ENCODE measurements at regions of chr1 and their contacts with region 1.

Region 1: DNA sequence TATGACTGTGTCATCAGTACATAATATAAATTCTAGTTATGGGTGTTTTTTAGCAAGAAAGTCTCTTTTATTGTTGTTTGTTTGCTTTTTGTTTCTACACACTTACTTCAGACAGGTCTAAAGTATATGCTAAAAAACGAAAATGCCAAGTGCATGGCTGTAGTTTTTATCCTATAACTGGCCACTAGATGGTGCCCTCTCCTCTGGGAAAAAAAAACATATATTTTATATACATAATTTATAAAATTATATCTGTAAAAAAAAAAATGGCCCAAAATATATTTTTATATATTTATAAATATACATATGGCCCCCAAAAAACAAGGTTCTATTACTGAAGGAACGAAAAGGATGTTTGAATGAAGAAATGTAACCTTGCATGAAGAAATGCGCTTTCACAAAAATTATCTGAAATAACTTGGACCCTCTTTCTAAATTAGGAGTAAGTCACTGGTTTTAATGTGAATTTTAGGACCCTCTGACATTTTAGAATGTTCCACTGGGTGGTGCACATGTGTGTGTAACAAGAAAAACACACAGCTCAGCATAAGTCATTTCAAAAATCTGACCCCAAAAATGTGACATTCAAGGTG is 93.5 kb downstream of the TTLL7 start:
- DNase-seq: no peak
- H3K4me3 Mint-ChIP-seq: no peak overlapping the region
- H3K27ac Mint-ChIP-seq: no peak overlapping the region
- H3K4me1 Mint-ChIP-seq: no peaks in the 10 kb centered on the region
- H3K27me3 Mint-ChIP-seq: peaks cover 13% of the 10 kb centered on the region

Region 2: DNA sequence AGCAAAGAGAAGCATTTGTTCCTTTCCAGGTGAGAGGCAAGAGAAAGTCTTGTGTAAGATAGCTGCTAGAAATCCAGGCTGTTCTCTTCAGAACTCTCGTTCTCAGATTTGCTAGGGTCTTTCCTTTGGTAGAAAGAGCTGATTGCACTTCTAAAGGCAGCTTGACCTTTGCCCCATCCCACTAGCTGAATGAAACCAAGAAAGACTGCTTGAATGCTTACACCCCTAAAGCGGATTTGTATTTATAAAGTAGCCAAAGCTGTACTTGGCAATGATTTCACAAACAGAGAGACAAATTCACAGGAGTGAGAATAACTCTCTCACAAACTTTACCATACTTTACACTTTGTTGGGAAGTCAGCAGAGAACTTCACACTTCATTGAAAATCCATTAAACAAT is 330.6 kb before region 1 on chr1:
- intact Hi-C with region 1: no loop called
- DNase-seq: no peak
- H3K4me3 Mint-ChIP-seq: no peak overlapping the region
- H3K27ac Mint-ChIP-seq: no peak overlapping the region
- H3K4me1 Mint-ChIP-seq: no peaks in the 10 kb centered on the region
- H3K27me3 Mint-ChIP-seq: no peaks in the 10 kb centered on the region

Region 3: GRCh38 chr1:83626603-83627002 is 278.8 kb before region 1 on chr1:
- intact Hi-C with region 1: no loop called
- DNase-seq: no peak
- H3K4me3 Mint-ChIP-seq: no peak overlapping the region
- H3K27ac Mint-ChIP-seq: no peak overlapping the region
- H3K4me1 Mint-ChIP-seq: no peaks in the 10 kb centered on the region
- H3K27me3 Mint-ChIP-seq: no peaks in the 10 kb centered on the region

Region 4: DNA sequence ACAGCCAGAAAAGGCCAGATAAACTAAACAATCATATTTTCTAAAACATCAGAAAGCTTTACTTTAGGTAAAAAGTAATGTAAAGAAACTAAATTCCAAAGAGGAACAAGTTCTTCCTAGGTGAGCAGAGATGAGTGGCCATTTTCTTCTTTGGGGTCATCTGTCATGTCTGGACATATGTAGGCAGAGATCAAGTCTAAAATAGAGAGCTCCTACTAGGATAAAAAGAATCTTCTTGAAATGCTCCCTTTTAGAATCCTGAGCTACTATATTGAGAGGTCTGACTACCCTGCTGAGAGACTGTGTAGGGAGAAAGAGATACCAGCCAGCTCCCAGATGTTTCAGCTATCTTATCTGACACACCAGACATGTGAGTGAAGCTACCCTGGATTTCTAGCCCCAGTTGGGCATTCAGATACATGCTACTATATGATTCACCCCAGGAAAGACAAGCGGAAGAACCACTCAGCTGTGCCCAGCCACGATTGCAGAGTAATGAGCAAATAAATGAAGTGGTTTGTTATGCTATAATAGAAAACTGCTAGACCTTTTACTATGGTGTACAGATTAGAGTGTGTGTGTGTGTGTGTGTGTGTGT is 13.4 kb after region 1 on chr1:
- intact Hi-C with region 1: no loop called
- DNase-seq: no peak
- H3K4me3 Mint-ChIP-seq: no peak overlapping the region
- H3K27ac Mint-ChIP-seq: no peak overlapping the region
- H3K4me1 Mint-ChIP-seq: no peaks in the 10 kb centered on the region
- H3K27me3 Mint-ChIP-seq: peaks cover under 1% of the 10 kb centered on the region

Region 5: DNA sequence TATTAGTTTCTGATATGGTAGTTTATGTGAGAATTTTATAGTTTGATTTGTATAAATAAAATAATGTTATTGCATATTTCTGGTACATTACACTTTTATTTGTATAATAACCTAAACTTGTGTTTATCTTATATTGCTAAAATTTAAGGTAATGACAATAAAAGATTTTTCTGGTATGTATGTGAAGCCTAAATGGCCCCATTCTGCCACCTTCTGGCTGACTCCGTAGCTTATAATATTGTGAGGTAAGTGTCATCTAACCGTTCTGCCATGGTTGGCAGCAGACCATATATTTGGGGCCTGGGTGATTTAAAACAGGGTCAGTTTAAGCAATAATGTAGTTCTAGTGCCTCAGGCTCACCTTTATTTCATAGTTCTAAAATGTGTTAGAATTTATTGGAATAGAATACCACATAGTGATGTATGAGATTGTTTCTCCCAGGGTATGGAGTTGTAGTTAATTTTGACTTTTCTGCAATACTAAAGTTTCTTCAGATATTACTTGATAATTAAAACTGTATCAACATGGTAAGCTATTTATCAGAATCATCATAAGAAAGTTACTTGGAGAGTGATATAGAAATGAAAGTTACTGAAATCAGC is 217.5 kb after region 1 on chr1:
- intact Hi-C with region 1: loop called (anchors 1 kb)
- DNase-seq: no peak
- H3K4me3 Mint-ChIP-seq: no peak overlapping the region
- H3K27ac Mint-ChIP-seq: no peak overlapping the region
- H3K4me1 Mint-ChIP-seq: no peaks in the 10 kb centered on the region
- H3K27me3 Mint-ChIP-seq: no peaks in the 10 kb centered on the region

Region 6: DNA sequence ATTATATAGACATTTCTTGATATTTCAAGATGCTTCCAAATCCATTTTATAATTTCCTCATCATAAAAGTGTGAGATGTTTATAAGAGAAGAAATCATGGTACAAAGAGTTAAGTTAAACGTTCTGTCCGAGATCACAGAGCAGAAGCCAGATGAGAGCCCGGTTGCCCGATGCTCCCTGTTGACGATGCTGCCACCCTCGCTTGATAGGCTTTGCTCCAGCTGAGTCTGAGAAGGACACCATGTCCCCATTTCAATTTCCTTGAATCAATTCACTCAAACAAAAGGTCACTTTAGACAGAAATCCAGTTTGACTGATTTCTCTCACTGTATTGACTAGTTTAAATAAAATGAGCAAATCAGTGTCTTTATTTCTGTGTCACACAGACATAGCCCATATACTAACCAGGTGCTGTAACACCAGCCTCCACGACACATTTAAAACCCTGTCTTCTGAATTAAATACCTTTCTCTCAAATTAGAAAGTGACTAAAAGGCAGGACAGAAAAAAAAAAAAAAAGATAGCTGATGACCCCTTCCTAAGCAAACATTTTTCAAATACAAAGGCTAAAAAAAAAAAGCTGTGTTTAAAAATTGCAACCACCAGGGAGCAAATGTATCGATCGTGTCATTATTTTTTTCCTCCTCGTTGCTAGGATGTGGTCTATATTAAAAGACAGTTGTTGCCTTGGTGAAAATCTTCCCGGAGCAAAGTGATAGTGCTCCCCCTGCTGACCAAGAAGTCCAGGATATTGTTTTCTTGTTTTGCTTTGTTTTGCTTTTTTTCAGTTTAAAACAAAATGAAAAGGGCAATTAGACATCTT is 528.1 kb after region 1 on chr1:
- intact Hi-C with region 1: loop called (anchors 2 kb)
- DNase-seq: peak; percentile 54
- H3K4me3 Mint-ChIP-seq: peak overlapping the region; percentile 41
- H3K27ac Mint-ChIP-seq: peak overlapping the region; percentile 9
- H3K4me1 Mint-ChIP-seq: peaks cover 11% of the 10 kb centered on the region
- H3K27me3 Mint-ChIP-seq: no peaks in the 10 kb centered on the region

Region 7: DNA sequence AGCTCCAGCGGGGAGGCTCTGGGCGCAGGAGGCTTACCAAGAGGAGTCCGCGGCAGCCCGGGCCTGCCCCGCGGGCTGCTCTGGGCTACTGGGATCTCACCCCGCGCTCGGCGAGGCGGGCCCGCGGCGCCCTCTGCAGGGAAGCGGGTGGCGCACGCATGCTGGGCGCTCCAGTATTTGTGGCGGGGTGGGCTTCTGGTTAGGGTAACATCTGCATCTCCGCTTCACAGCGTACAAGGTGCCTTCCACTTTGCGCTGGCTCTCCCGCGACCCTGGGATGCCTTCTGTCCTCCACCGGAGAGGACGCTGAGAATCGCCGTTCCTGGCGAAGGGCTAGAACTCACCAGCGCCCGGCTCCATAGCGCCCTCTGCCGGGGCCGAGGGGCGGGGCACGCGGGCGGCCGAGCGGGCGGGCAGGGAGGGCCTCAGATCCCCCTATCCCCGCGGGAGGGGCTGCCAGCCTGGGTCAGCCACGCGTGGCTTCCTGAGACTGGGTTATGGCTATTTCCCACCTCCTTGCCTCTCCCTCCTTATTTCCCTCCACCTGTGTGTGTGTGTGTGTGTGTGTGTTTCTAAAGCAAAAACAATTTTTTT is 715.4 kb after region 1 on chr1:
- intact Hi-C with region 1: loop called (anchors 10 kb)
- DNase-seq: peak; percentile 79
- H3K4me3 Mint-ChIP-seq: peak overlapping the region; percentile 88
- H3K27ac Mint-ChIP-seq: peak overlapping the region; percentile 80
- H3K4me1 Mint-ChIP-seq: peaks cover 23% of the 10 kb centered on the region
- H3K27me3 Mint-ChIP-seq: no peaks in the 10 kb centered on the region

Region 8: DNA sequence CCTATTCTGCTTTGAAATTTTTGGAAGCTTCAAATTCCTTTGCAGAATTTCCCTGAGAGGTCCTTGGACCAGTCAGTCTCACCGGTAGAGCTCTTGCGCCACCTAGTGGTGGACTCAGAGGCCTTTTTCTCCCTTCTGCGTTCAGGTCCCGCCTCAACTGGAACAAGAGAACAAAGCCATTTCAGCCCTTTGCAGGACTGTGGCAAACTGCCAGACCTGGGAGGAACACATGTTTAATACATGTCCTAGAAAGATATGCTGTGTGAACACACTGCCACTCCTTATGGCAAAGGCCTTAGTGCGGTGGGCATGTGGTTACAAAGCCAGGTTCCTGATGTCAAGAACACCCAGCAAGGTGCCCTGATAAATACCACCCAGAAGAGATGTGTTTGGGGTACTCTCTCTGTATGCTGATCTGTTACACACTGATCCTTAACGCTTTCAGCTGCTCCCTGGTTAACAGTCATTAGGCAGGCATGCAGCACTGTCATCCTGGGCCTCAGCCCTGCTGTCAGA is 867.1 kb after region 1 on chr1:
- intact Hi-C with region 1: loop called (anchors 2 kb)
- DNase-seq: peak; percentile 48
- H3K4me3 Mint-ChIP-seq: no peak overlapping the region
- H3K27ac Mint-ChIP-seq: no peak overlapping the region
- H3K4me1 Mint-ChIP-seq: peaks cover 6% of the 10 kb centered on the region
- H3K27me3 Mint-ChIP-seq: peaks cover 21% of the 10 kb centered on the region

Region 9: GRCh38 chr1:84936116-84936810 is 1030.9 kb after region 1 on chr1:
- intact Hi-C with region 1: loop called (anchors 10 kb)
- DNase-seq: peak; percentile 26
- H3K4me3 Mint-ChIP-seq: no peak overlapping the region
- H3K27ac Mint-ChIP-seq: no peak overlapping the region
- H3K4me1 Mint-ChIP-seq: peaks cover 7% of the 10 kb centered on the region
- H3K27me3 Mint-ChIP-seq: no peaks in the 10 kb centered on the region

Measured in activated T-helper 1 cell treated with anti-CD3 and anti-CD28 coated beads, Interleukin-12 subunit alpha, Interleukin-12 subunit beta, Interleukin-2, Interleukin-4 antibody, amounts not matched to agents 30 ng/mL and 10 ng/mL and 1 ng/mL, durations not matched to agents 14 hours and 24 hours and 36 hours (primary cell).